AG04449 (cell line): ENCODE measurements at regions of chr9 and their contacts with region 1.

Region 1: GRCh38 chr9:124776954-124777665 is at the start of gene OLFML2A:
- DNase-seq: no peak
- H3K4me3 ChIP-seq: peak within 1 kb of the TSS; percentile 58
- CTCF ChIP-seq: peak; percentile 40

Region 2: DNA sequence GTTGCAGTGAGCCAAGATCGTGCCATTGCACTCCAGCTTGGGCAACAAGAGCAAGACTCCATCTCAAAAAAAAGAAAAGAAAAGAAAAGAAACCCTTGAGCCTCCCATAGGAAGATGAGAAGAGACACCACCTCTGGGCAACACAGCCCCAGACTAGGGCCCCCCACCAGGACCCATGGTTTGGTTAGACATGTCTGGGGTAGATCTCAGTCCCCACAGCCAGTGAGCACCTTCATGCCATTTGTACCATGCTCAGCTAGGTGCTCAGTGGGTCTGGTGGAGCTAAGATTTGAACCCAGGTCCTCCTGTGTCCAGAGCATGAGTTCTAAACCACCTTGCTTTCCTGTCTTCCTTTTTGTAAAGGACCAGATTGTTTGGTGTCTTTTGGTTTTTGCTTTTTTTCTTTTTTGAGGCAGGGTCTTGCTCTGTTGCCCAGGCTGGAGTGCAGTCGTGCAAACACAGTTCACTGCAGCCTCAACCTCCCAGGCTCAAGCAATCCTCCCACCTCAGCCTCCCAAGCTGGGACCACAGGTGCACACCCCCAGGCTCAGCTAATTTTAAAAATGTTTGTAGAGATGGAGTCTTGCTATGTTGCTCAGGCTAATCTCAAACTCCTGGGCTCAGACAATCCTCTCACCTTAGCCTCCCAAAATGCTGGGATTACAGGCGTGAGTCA is 11.6 kb after region 1 on chr9:
- CTCF ChIA-PET with region 1: interaction called, 138 read pairs
- POLR2A ChIA-PET with region 1: no interaction called
- DNase-seq: no peak
- H3K4me3 ChIP-seq: no peak overlapping the region
- CTCF ChIP-seq: no peak

Region 3: GRCh38 chr9:125008599-125008998 is 231.5 kb after region 1 on chr9:
- CTCF ChIA-PET with region 1: no interaction called
- POLR2A ChIA-PET with region 1: no interaction called
- DNase-seq: no peak
- H3K4me3 ChIP-seq: no peak overlapping the region
- CTCF ChIP-seq: no peak

Region 4: GRCh38 chr9:125180876-125181275 is 403.8 kb after region 1 on chr9:
- CTCF ChIA-PET with region 1: no interaction called
- POLR2A ChIA-PET with region 1: no interaction called
- DNase-seq: no peak
- H3K4me3 ChIP-seq: no peak overlapping the region
- CTCF ChIP-seq: no peak